Gastrocnemius medialis (tissue), 4 donors: ENCODE measurements at regions of chr15 and their contacts with region 1.

Region 1: GRCh38 chr15:86231864-86232721 is 152.4 kb downstream of the AGBL1 start:
- DNase-seq: no peak
- ATAC-seq: no peak
- H3K4me3 ChIP-seq: no peak overlapping the region
- H3K27ac ChIP-seq: no peak overlapping the region
- H3K4me1 ChIP-seq: no peaks in the 10 kb centered on the region
- H3K27me3 ChIP-seq: no peaks in the 10 kb centered on the region
- CTCF ChIP-seq: peak in 4 of 5 experiments; percentile 8 to 49 (median 42)
- POLR2A ChIP-seq: no peak

Region 2: DNA sequence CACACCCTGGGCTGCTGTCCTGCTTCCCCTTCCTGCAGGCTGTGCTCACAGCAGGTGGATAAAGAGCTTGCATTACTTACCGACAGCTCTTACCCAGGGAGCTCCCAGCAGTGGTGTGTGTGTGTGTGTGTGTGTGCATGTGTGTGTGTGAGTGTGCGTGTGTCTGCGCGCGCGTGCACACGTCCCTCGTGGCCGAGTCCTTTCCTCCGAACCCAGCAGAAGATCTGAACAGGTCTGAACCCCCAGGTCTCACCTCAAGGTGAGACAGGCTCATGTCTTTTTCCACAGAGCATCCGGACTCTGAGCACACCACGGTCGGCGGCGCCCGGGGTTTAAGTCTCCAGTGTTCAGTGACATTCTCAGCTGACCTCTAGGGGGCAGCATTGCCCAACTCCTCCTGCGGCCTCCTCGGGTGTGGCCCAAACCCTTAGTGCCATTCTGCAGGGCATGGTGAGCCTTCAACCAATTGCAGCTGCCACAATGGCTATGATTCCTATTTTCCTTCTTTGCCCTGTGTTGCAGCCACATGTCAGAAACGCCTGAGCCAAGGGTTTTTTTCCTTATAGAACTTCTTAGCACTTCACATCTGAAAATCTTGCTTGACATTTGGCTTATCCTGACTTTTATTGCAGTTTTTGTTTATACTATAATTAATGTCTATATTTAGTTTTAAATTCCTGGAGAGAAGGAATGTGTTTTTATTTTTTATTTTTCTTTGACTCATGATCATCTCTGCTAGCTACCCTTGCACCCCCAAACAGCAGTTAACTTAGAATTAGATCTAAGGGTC is 373.3 kb before region 1 on chr15:
- in situ Hi-C with region 1: loop called in 3 of 4 experiments (anchors 10 to 25 kb)
- intact Hi-C with region 1: no loop called
- DNase-seq: peak; percentile 29 to 54
- ATAC-seq: peak; percentile 84 to 90
- H3K4me3 ChIP-seq: no peak overlapping the region
- H3K27ac ChIP-seq: no peak overlapping the region
- H3K4me1 ChIP-seq: peaks cover 0 to 5% of the 10 kb centered on the region in 2 donors
- H3K27me3 ChIP-seq: no peaks in the 10 kb centered on the region
- CTCF ChIP-seq: peak; percentile 63 to 84 (median 75)
- POLR2A ChIP-seq: no peak

Region 3: DNA sequence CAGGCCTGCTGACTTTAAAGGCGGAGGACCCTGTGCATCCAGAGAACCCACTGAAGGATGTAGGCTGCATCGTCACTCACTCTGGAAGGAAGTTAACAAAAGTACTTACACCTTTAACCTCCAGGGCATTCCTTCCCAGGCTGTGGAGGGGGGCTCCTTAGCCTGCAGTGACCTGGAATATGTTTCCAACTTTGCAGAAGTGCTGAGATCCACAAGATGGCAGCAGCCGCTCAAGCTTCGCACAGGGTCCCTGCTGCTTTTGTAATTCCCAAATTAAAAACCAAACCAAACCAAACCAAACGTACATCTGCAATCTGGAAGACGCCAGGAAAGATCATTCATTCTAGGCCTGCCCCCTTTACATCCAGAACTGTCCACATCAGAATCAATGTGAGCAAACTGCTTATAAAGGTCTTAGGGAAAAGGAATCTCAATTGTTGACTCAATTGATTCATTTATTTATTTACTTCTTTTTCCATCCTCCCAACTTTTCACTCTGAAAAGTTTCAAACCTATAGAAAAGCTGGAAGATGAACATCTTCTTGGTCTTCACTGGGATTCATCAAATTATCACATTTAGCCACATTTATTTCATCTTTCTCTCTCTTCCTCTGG is 366.9 kb before region 1 on chr15:
- in situ Hi-C with region 1: loop called in 3 of 4 experiments (anchors 10 to 25 kb)
- intact Hi-C with region 1: no loop called
- DNase-seq: no peak
- ATAC-seq: peak in 1 of 2 donors; percentile 74
- H3K4me3 ChIP-seq: no peak overlapping the region
- H3K27ac ChIP-seq: no peak overlapping the region
- H3K4me1 ChIP-seq: no peaks in the 10 kb centered on the region
- H3K27me3 ChIP-seq: no peaks in the 10 kb centered on the region
- CTCF ChIP-seq: peak; percentile 56 to 74 (median 66)
- POLR2A ChIP-seq: no peak

Region 4: GRCh38 chr15:86588413-86588812 is 356.3 kb after region 1 on chr15:
- in situ Hi-C with region 1: no loop called
- intact Hi-C with region 1: no loop called
- DNase-seq: no peak
- ATAC-seq: no peak
- H3K4me3 ChIP-seq: no peak overlapping the region
- H3K27ac ChIP-seq: no peak overlapping the region
- H3K4me1 ChIP-seq: peaks cover 0 to 4% of the 10 kb centered on the region in 2 donors
- H3K27me3 ChIP-seq: no peaks in the 10 kb centered on the region
- CTCF ChIP-seq: no peak
- POLR2A ChIP-seq: no peak

Region 5: GRCh38 chr15:86743283-86743903 is 511.3 kb after region 1 on chr15:
- in situ Hi-C with region 1: loop called in 1 of 4 experiments (anchors 25 kb)
- intact Hi-C with region 1: no loop called
- DNase-seq: peak in 1 of 2 donors; percentile 12
- ATAC-seq: no peak
- H3K4me3 ChIP-seq: no peak overlapping the region
- H3K27ac ChIP-seq: no peak overlapping the region
- H3K4me1 ChIP-seq: no peaks in the 10 kb centered on the region
- H3K27me3 ChIP-seq: no peaks in the 10 kb centered on the region
- CTCF ChIP-seq: peak in 4 of 5 experiments; percentile 13 to 20 (median 16)
- POLR2A ChIP-seq: no peak